Psoas muscle (tissue), 8 donors: ENCODE measurements at regions of chr10 and their contacts with region 1.

Region 1: GRCh38 chr10:110007701-110008517 is at the start of gene ADD3:
- DNase-seq: peak; percentile 94 to 96
- ATAC-seq: peak; percentile 93 to 95 (median 94)
- H3K4me3 ChIP-seq: peak within 1 kb of the TSS; percentile 99
- H3K27ac ChIP-seq: peak within 1 kb of the TSS; percentile 83
- H3K4me1 ChIP-seq: peaks cover 28% of the 10 kb centered on the region
- H3K27me3 ChIP-seq: no peaks in the 10 kb centered on the region
- CTCF ChIP-seq: no peak
- total RNA-seq, gene ADD3: 8.0 to 26.3 (median 14.0) TPM

Region 2: DNA sequence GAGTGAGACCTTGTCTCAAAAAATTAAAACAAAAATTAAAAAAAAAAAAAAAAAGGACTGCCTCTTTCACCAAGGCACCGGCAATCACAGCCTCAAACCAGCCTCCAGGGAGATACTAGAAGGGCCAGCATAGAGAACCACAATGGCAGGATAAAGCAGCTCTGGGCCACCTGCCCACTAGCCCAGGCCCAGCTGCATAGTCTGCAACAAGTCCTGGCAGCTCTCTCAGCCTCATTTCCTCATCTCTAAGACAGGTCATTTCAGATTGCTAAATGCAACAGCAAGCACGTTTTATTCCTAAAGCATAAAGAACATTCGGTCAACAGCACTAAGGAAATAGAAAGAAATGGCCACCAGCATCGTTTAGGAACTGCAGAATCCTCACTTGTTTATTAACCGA is 113.4 kb before region 1 on chr10:
- intact Hi-C with region 1: loop called in 1 of 2 experiments (anchors 5 kb)
- DNase-seq: peak; percentile 86 to 92
- ATAC-seq: peak; percentile 90 to 95 (median 92)
- H3K4me3 ChIP-seq: peak overlapping the region; percentile 14
- H3K27ac ChIP-seq: peak overlapping the region; percentile 68
- H3K4me1 ChIP-seq: peaks cover 41% of the 10 kb centered on the region
- H3K27me3 ChIP-seq: no peaks in the 10 kb centered on the region
- CTCF ChIP-seq: no peak

Region 3: DNA sequence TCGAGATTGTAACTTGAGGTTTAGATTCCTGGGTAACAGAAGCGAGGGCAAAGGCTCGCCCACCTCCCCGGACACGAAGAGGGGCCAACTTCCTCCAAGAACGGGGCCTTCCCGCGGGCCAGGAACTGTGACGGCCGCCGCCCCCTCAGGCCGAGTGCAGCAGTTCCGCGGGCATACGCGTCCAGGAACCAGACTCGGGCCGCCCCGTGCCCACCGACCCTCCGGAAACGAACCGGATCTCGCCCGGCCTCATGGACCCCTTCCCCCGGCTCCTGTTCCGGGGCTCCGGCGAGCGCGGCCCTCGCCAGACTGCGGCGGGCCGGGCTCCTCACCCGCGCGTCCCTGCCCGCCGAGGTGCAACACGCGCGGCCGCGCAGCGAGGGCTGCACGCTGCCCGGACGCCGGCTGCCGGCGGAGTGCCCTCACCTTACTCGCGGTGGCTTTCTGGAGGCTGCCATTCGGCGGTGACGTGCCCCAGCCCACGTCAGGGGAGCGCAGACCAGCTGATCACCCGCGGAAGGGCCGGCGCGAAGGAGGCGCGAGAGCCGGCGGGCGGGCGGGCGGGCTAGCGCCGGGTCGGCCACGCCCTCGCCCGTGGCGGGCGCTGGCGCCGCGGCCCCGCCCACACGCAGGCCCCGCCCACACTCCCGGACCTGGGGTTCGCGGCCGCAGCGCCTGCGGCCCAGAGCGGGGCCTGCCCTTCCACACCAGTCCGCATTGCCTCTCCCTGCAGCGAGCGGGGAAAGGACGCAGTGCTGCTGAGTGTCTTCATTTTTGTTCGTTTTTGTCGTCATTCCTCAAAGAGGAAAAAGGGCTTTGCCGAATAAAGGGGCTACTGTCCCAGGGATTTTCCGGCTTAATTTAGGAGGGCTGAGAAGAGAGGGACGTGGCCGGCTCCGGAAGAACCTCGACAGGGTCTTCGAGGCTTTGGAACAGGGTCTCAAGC is 84.7 kb before region 1 on chr10 and contains the start of gene XPNPEP1:
- intact Hi-C with region 1: loop called in 1 of 2 experiments (anchors 2 kb)
- DNase-seq: peak; percentile 90 to 94
- ATAC-seq: peak; percentile 98 to 99 (median 98)
- H3K4me3 ChIP-seq: peak within 1 kb of the TSS; percentile 95
- H3K27ac ChIP-seq: peak within 1 kb of the TSS; percentile 99
- H3K4me1 ChIP-seq: peaks cover 13% of the 10 kb centered on the region
- H3K27me3 ChIP-seq: no peaks in the 10 kb centered on the region
- CTCF ChIP-seq: no peak
- total RNA-seq, gene XPNPEP1: 34.9 to 62.3 (median 43.8) TPM

Region 4: DNA sequence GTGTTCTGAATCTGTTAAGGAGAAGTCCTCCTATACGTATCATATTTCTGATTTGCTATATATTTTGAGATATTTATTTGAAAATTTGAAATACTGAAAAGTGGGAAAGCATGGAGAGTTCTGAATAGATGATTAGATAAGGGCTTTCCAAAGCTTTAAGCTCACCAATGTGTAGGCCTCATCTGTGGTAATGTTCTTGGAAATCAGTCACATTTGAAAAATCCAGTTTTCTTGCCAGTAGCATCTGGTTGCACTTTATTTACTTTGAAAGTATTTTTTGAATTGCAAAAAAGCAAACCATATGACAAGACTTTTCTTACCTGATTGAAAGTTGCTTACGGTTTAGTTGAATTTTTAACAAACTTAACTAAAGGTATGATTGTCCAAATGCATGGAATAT is 21.5 kb after region 1 on chr10:
- intact Hi-C with region 1: loop called in 1 of 2 experiments (anchors 1 kb)
- DNase-seq: no peak
- ATAC-seq: no peak
- H3K4me3 ChIP-seq: no peak overlapping the region
- H3K27ac ChIP-seq: no peak overlapping the region
- H3K4me1 ChIP-seq: peaks cover 24% of the 10 kb centered on the region
- H3K27me3 ChIP-seq: no peaks in the 10 kb centered on the region
- CTCF ChIP-seq: no peak

Region 5: DNA sequence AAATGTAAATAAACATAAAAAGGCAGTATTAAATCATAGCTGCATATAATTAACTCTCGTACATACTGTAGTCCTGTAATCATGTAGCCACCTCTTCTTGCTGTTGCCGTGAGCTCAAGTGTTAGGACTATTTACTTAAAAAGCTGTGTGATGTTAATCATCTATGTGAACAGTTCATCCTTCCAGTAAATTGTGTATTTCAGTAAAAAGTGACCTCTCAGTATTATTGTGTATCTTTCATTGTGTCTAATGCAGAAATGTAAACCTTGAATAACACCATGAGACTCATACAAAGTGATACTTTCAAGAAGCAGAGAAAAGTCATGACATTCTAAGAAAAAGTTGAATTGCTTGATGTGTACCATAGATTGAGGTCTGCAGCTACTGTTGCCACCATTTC is 37.9 kb after region 1 on chr10:
- intact Hi-C with region 1: no loop called
- DNase-seq: no peak
- ATAC-seq: no peak
- H3K4me3 ChIP-seq: no peak overlapping the region
- H3K27ac ChIP-seq: no peak overlapping the region
- H3K4me1 ChIP-seq: no peaks in the 10 kb centered on the region
- H3K27me3 ChIP-seq: no peaks in the 10 kb centered on the region
- CTCF ChIP-seq: no peak

Region 6: GRCh38 chr10:110074758-110075671 is 67.1 kb after region 1 on chr10:
- intact Hi-C with region 1: loop called in 1 of 2 experiments (anchors 5 kb)
- DNase-seq: no peak
- ATAC-seq: peak; percentile 51 to 73 (median 71)
- H3K4me3 ChIP-seq: peak overlapping the region; percentile 23
- H3K27ac ChIP-seq: peak overlapping the region; percentile 54
- H3K4me1 ChIP-seq: peaks cover 53% of the 10 kb centered on the region
- H3K27me3 ChIP-seq: no peaks in the 10 kb centered on the region
- CTCF ChIP-seq: no peak